ENCODE measurements at regions of chr16 and their contacts with region 1.

Region 1: DNA sequence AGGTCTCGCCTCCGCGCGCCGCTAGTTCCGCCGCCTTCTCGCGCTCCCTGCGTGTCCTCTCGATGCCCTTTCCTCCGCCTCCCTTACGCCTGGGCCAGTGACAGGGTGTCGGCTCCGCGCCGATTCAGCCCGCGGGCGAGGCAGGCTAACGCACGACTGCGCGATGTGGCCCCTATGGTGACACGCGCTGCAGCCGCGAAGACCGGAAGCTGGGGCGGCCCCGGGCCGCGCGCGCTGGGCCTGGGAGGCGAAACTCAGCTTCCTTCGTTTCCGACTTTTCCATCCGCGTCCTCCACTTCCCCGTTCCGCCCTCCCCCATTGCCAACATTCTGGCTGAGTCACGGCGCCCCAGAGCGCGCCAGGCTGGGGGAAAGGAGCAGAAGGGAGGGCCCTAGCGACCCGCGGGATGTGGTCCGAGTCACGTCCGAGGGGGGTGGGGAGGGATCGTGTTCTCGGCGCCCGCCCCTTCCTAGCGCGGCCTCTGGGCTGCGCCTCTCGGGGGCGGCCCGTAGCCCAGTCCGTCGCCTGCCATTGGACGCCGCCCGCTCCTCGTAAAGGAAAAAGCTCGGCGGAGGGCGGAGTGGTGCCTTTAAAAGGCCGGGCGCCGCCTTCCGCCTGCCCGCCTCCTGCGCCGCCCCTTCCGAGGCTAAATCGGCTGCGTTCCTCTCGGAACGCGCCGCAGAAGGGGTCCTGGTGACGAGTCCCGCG is at the start of gene ALDOA:
- DNase-seq: peak; percentile 87 to 96 (median 91)
- ATAC-seq: peak; percentile 83 to 88 (median 86)
- H3K4me3 ChIP-seq: peak within 1 kb of the TSS; percentile 95 to 96
- H3K4me3 Mint-ChIP-seq: peak within 1 kb of the TSS; percentile 94 to 99 (median 98)
- H3K27ac ChIP-seq: peak within 1 kb of the TSS; percentile 93
- H3K27ac Mint-ChIP-seq: peak within 1 kb of the TSS; percentile 98
- H3K4me1 ChIP-seq: peaks cover 14 to 61% of the 10 kb centered on the region in 2 experiments
- H3K4me1 Mint-ChIP-seq: peaks cover 30 to 39% (median 39%) of the 10 kb centered on the region in 3 donors
- H3K27me3 ChIP-seq: no peaks in the 10 kb centered on the region
- H3K27me3 Mint-ChIP-seq: no peaks in the 10 kb centered on the region
- total RNA-seq, gene ALDOA: 367 to 715 (median 567) TPM

Region 2: GRCh38 chr16:29825145-29826044 is 239.9 kb before region 1 on chr16:
- CTCF ChIA-PET with region 1: no interaction called
- POLR2A ChIA-PET with region 1: interaction called in 1 of 2 experiments, 18 read pairs
- DNase-seq: peak in 4 of 35 experiments; percentile 22 to 55 (median 30)
- ATAC-seq: peak in 3 of 4 experiments; percentile 22 to 25 (median 24)
- H3K4me3 ChIP-seq: no peak overlapping the region
- H3K4me3 Mint-ChIP-seq: peak overlapping the region; percentile 46 to 79 (median 47)
- H3K27ac ChIP-seq: peak overlapping the region; percentile 46
- H3K27ac Mint-ChIP-seq: peak overlapping the region; percentile 96
- H3K4me1 ChIP-seq: peaks cover 45 to 97% of the 10 kb centered on the region in 2 experiments
- H3K4me1 Mint-ChIP-seq: peaks cover 71 to 94% (median 85%) of the 10 kb centered on the region in 3 donors
- H3K27me3 ChIP-seq: no peaks in the 10 kb centered on the region
- H3K27me3 Mint-ChIP-seq: no peaks in the 10 kb centered on the region

Region 3: DNA sequence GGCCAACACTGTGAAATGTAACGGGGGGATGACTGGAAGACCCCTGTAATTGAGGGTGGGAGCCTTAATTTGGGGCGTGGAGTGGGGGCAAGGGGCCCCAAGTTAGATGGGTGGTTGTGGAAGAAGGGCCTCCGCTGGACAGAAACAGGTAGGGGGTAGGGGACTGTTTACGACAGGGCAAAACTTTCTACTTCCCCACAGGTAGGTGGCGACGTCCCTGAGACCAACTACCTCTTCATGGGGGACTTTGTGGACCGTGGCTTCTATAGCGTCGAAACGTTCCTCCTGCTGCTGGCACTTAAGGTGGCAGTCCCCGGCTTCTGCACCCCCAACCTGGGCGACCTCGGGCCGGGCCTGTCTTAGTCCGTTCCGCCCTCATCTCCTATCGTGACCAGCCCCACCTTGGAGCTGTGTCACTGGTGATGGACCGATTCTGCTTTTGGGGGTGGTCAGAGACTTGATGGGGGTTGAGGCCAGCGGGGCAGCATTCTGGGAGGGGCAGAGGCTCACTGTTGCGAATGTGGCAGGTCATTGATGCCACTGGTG is 17.3 kb after region 1 on chr16:
- CTCF ChIA-PET with region 1: no interaction called
- POLR2A ChIA-PET with region 1: interaction called in 1 of 2 experiments, 13 read pairs
- DNase-seq: no peak
- ATAC-seq: no peak
- H3K4me3 ChIP-seq: no peak overlapping the region
- H3K4me3 Mint-ChIP-seq: no peak overlapping the region
- H3K27ac ChIP-seq: no peak overlapping the region
- H3K27ac Mint-ChIP-seq: no peak overlapping the region
- H3K4me1 ChIP-seq: peaks cover 0 to 28% of the 10 kb centered on the region in 2 experiments
- H3K4me1 Mint-ChIP-seq: peaks cover 18 to 25% (median 22%) of the 10 kb centered on the region in 3 donors
- H3K27me3 ChIP-seq: no peaks in the 10 kb centered on the region
- H3K27me3 Mint-ChIP-seq: no peaks in the 10 kb centered on the region

Region 4: GRCh38 chr16:30091474-30092372 is 26.4 kb after region 1 on chr16 and contains the start of gene TBX6:
- CTCF ChIA-PET with region 1: interaction called, 4 to 12 read pairs
- POLR2A ChIA-PET with region 1: no interaction called
- DNase-seq: peak; percentile 82 to 95 (median 90)
- ATAC-seq: peak; percentile 79 to 87 (median 82)
- H3K4me3 ChIP-seq: peak within 1 kb of the TSS; percentile 62
- H3K4me3 Mint-ChIP-seq: peak within 1 kb of the TSS; percentile 83 to 93 (median 84)
- H3K27ac ChIP-seq: peak within 1 kb of the TSS; percentile 74
- H3K27ac Mint-ChIP-seq: peak within 1 kb of the TSS; percentile 96
- H3K4me1 ChIP-seq: peaks cover 38 to 69% of the 10 kb centered on the region in 2 experiments
- H3K4me1 Mint-ChIP-seq: peaks cover 47 to 56% (median 52%) of the 10 kb centered on the region in 3 donors
- H3K27me3 ChIP-seq: no peaks in the 10 kb centered on the region
- H3K27me3 Mint-ChIP-seq: no peaks in the 10 kb centered on the region
- total RNA-seq, gene TBX6: 1.4 to 2.0 (median 1.5) TPM

Region 5: GRCh38 chr16:30104494-30104968 is 39.2 kb after region 1 on chr16:
- CTCF ChIA-PET with region 1: no interaction called
- POLR2A ChIA-PET with region 1: no interaction called
- DNase-seq: no peak
- ATAC-seq: no peak
- H3K4me3 ChIP-seq: no peak overlapping the region
- H3K4me3 Mint-ChIP-seq: no peak overlapping the region
- H3K27ac ChIP-seq: no peak overlapping the region
- H3K27ac Mint-ChIP-seq: peak overlapping the region in 1 of 2 donors; percentile 24
- H3K4me1 ChIP-seq: no peaks in the 10 kb centered on the region
- H3K4me1 Mint-ChIP-seq: peaks cover 0 to 2% (median 0%) of the 10 kb centered on the region in 3 donors
- H3K27me3 ChIP-seq: no peaks in the 10 kb centered on the region
- H3K27me3 Mint-ChIP-seq: no peaks in the 10 kb centered on the region

Region 6: DNA sequence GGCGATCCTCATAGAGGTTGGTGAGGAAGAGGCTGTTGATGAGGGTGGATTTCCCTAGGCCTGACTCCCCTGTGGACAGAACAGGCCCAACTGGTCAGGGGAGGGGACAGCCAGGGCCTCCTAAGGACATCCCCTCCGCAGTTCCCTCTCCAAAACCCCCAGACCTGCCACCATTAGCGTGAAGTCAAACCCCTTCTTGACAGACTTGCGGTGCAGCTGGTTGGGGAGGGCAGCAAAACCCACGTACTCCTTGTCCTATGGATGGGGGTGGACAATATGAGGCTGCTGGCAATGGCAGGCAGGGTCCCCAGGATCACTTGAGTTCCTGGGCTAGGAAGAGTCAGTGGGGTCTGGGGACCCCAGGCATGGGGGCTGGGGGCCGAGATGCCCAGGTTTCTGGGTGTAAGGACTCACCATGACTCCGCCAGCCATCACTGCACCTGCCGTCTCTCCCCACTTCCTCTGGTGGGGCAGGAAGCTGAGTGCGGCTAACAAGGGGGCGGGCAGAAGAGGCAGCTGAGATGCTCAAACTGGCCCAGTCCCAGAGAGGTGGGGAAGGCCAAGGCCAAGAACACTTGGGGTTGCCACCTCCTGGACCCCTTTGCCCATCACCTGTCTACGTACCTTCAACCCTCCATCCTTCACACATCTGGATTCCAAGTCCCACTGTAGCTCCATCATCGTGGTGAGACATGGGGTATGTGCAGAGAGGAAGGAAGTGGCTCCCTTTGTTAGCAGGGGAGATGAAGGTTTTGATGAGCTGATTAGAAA is 317.0 kb after region 1 on chr16 and contains the start of gene SEPTIN1:
- CTCF ChIA-PET with region 1: no interaction called
- POLR2A ChIA-PET with region 1: no interaction called
- DNase-seq: peak; percentile 59 to 85 (median 74)
- ATAC-seq: peak; percentile 37 to 47 (median 46)
- H3K4me3 ChIP-seq: peak within 1 kb of the TSS; percentile 72
- H3K4me3 Mint-ChIP-seq: peak within 1 kb of the TSS; percentile 80 to 100 (median 99)
- H3K27ac ChIP-seq: peak within 1 kb of the TSS; percentile 96
- H3K27ac Mint-ChIP-seq: peak within 1 kb of the TSS; percentile 99 to 100
- H3K4me1 ChIP-seq: peaks cover 26 to 74% of the 10 kb centered on the region in 2 experiments
- H3K4me1 Mint-ChIP-seq: peaks cover 63 to 65% (median 64%) of the 10 kb centered on the region in 3 donors
- H3K27me3 ChIP-seq: no peaks in the 10 kb centered on the region
- H3K27me3 Mint-ChIP-seq: no peaks in the 10 kb centered on the region
- total RNA-seq, gene SEPTIN1: 191 to 259 (median 229) TPM

Region 7: DNA sequence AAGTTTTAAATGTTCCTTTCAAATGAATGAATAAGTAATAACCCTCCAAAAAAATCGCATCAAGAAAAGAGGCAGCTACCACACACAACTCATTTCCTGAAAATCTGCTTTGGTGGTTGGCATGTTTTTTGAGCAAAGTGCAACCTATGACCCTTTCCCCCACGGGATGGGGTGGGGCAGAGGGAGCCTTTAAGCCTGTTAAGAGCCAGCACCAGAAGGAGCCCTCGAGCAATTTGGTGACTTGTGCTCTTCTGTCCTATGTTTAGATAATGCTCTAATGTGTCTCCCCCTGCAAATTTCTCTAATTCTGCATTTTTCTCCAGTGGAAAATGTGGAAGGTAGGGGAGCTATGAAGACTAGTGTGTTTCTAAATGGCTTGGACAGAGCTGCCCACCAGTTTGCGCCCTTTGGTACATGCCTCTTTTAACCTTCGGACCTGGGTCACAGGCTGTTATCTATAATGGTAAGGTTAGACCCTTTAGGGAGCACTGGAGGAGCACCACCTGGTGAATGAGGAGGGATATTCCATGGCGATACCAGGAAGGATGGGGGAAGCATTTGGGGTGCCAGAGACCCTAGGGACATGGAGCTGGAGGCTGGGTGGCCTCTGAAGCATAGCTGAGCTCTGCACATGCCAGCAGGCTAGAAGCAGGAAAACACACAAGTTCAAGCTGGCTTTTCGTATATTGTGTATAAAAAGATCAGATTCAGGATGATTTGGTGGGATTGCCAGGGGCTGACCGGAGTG is 1135.7 kb after region 1 on chr16:
- CTCF ChIA-PET with region 1: no interaction called
- POLR2A ChIA-PET with region 1: no interaction called
- DNase-seq: peak in 31 of 35 experiments; percentile 36 to 73 (median 54)
- ATAC-seq: peak; percentile 32 to 48 (median 42)
- H3K4me3 ChIP-seq: peak overlapping the region; percentile 89 to 95
- H3K4me3 Mint-ChIP-seq: peak overlapping the region; percentile 87 to 90 (median 89)
- H3K27ac ChIP-seq: peak overlapping the region; percentile 67
- H3K27ac Mint-ChIP-seq: peak overlapping the region; percentile 57 to 87
- H3K4me1 ChIP-seq: peaks cover 13 to 46% of the 10 kb centered on the region in 2 experiments
- H3K4me1 Mint-ChIP-seq: peaks cover 54 to 58% (median 56%) of the 10 kb centered on the region in 3 donors
- H3K27me3 ChIP-seq: no peaks in the 10 kb centered on the region
- H3K27me3 Mint-ChIP-seq: no peaks in the 10 kb centered on the region

Measured in T-cell (primary cell).